ENCODE measurements at regions of chr17 and their contacts with region 1.

Region 1: GRCh38 chr17:40026816-40027613 is 11.8 kb downstream of the CSF3 start:
- DNase-seq: peak; percentile 84 to 93
- ATAC-seq: peak; percentile 80 to 87 (median 83)
- H3K4me3 ChIP-seq: no peak overlapping the region
- H3K27ac ChIP-seq: peak overlapping the region; percentile 28
- H3K4me1 ChIP-seq: peaks cover 49% of the 10 kb centered on the region
- H3K27me3 ChIP-seq: no peaks in the 10 kb centered on the region
- CTCF ChIP-seq: peak; percentile 90

Region 2: GRCh38 chr17:39954876-39955275 is 72.1 kb before region 1 on chr17:
- intact Hi-C with region 1: loop called in 1 of 2 experiments (anchors 5 kb)
- DNase-seq: no peak
- ATAC-seq: no peak
- H3K4me3 ChIP-seq: no peak overlapping the region
- H3K27ac ChIP-seq: no peak overlapping the region
- H3K4me1 ChIP-seq: peaks cover 5% of the 10 kb centered on the region
- H3K27me3 ChIP-seq: no peaks in the 10 kb centered on the region
- CTCF ChIP-seq: no peak

Region 3: GRCh38 chr17:40075201-40075941 is 48.4 kb after region 1 on chr17:
- intact Hi-C with region 1: no loop called
- DNase-seq: peak; percentile 83 to 93
- ATAC-seq: peak; percentile 64 to 72 (median 71)
- H3K4me3 ChIP-seq: peak overlapping the region; percentile 51
- H3K27ac ChIP-seq: peak overlapping the region; percentile 94
- H3K4me1 ChIP-seq: peaks cover 68% of the 10 kb centered on the region
- H3K27me3 ChIP-seq: no peaks in the 10 kb centered on the region
- CTCF ChIP-seq: peak; percentile 88

Region 4: DNA sequence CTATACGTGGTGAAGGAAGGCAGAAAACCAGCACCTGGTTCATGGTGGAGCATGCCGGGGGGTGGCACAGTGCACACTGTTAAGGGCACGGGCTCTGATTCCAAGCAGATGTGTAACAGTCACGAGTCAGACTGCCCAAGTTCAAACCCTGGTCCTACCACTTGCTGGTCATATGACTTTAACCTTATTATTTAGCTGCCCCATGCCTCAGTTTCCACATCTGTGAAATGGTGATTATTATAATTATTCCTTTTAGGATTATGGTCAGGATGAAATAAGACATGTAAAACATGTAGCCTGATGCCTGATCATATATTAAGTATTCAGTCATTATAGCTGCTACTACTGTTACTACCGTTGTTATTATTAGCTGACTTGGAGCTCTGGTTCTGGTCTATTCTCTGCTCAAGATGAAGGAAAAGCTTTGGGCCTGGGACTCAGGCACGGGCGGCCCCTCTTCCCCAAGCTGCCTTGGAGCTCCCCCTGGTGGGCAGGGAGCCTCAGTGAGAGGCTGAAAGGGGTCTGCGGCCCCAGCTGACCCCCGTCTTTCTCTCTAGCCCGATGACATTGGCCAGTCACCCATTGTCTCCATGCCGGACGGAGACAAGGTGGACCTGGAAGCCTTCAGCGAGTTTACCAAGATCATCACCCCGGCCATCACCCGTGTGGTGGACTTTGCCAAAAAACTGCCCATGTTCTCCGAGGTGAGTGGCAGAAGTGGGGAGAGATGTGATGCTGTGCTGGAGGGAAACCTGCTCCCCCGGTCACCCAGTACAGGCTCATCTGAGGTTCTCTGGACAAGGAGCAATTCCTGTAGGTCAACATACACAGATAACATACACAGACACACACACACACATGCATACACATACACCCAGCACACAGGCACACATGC is 59.4 kb after region 1 on chr17:
- intact Hi-C with region 1: no loop called
- DNase-seq: peak; percentile 75 to 87
- ATAC-seq: peak; percentile 58 to 75 (median 70)
- H3K4me3 ChIP-seq: no peak overlapping the region
- H3K27ac ChIP-seq: peak overlapping the region; percentile 61
- H3K4me1 ChIP-seq: peaks cover 12% of the 10 kb centered on the region
- H3K27me3 ChIP-seq: no peaks in the 10 kb centered on the region
- CTCF ChIP-seq: peak; percentile 91